ENCODE measurements at regions of chr3 and their contacts with region 1.

Region 1: DNA sequence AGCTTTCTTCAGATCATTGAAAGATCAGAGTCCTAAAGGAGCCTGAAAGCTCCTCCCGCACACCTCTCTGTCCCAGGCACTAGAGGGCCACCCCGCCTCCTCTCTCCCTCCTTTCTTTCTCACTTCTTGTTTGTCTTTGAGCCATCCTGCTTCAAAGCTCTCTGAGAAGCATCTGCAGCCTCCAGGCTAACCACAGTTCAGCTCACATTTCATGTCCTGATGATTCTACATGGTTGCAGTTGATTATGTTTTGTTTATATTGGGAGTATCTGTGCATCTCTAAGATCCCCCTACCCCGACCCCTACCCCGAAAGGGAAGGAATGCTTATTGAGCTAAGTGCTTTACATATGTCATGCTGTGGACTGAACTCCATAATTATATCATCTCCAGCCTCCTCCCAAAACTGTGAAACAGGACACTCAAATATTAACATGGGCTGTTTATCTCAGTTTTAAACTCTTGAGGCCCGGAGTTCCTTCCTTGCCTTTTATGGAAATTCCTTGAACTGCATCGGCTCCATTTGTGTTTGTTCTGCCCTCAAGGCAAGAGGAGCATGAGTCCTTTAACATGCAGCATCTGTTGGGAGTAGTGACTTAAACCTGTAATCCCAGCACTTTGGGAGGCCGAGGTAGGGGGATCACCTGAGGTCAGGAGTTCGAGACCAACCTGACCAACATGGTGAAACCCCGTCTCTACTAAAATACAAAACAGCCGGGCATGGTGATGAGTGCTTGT is 30.9 kb downstream of the MGLL start:
- DNase-seq: peak; percentile 49
- ATAC-seq: peak; percentile 95
- H3K4me3 Mint-ChIP-seq: no peak overlapping the region
- H3K27ac Mint-ChIP-seq: no peak overlapping the region
- H3K4me1 Mint-ChIP-seq: peaks cover 16% of the 10 kb centered on the region
- H3K27me3 Mint-ChIP-seq: no peaks in the 10 kb centered on the region
- CTCF ChIP-seq: no peak

Region 2: DNA sequence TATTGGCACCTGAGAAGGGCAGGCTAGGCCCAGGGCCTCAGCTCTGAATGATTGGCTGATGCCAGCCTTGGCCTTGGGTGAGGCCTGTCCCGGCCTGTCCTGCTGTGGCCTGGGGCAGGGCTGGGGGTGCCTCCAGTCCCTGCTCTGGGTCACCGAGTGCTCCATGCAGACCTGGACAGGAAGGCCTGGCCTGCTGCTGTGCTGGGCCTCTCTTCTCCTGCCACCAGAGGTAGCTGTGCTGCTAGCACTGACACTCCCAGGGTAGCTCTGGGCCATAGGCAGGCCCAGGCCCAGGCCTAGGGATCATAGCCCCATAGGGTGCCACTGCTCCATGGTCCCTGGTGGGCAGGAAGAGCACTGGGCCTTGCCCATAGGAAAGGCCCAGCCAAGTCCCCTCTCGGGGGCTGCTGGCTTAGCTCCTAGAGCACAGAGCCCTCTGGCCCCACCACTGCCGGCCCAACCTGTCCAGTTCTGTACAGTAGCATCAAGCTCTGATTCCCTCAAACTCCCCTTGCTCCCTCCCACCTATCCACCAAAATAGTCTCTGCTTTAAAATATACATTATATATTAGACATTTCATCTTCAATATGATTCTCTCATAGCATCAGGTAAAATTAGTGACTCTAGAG is 100.4 kb before region 1 on chr3:
- CTCF ChIA-PET with region 1: interaction called, 11 read pairs
- POLR2A ChIA-PET with region 1: no interaction called
- DNase-seq: peak; percentile 71
- ATAC-seq: peak; percentile 94
- H3K4me3 Mint-ChIP-seq: no peak overlapping the region
- H3K27ac Mint-ChIP-seq: no peak overlapping the region
- H3K4me1 Mint-ChIP-seq: peaks cover 19% of the 10 kb centered on the region
- H3K27me3 Mint-ChIP-seq: no peaks in the 10 kb centered on the region
- CTCF ChIP-seq: no peak

Region 3: GRCh38 chr3:127822698-127823425 is 31.5 kb after region 1 on chr3:
- CTCF ChIA-PET with region 1: interaction called, 14 read pairs
- POLR2A ChIA-PET with region 1: no interaction called
- DNase-seq: peak; percentile 28
- ATAC-seq: peak; percentile 46
- H3K4me3 Mint-ChIP-seq: peak overlapping the region; percentile 82
- H3K27ac Mint-ChIP-seq: no peak overlapping the region
- H3K4me1 Mint-ChIP-seq: peaks cover 29% of the 10 kb centered on the region
- H3K27me3 Mint-ChIP-seq: peaks cover 39% of the 10 kb centered on the region
- CTCF ChIP-seq: no peak